ENCODE measurements at regions of chr6 and their contacts with region 1.

Region 1: GRCh38 chr6:154783229-154783628 is 50.0 kb downstream of the SCAF8 start:
- DNase-seq: no peak
- ATAC-seq: no peak
- H3K4me3 ChIP-seq: no peak overlapping the region
- H3K4me3 Mint-ChIP-seq: no peak overlapping the region
- H3K27ac ChIP-seq: no peak overlapping the region
- H3K27ac Mint-ChIP-seq: peak overlapping the region in 6 of 9 donors; percentile 12 to 67 (median 37)
- H3K4me1 ChIP-seq: no peaks in the 10 kb centered on the region
- H3K4me1 Mint-ChIP-seq: peaks cover 16 to 77% (median 49%) of the 10 kb centered on the region in 7 donors
- H3K27me3 ChIP-seq: no peaks in the 10 kb centered on the region
- H3K27me3 Mint-ChIP-seq: no peaks in the 10 kb centered on the region

Region 2: GRCh38 chr6:154738551-154738961 is 44.7 kb before region 1 on chr6:
- CTCF ChIA-PET with region 1: no interaction called
- POLR2A ChIA-PET with region 1: interaction called, 3 read pairs
- intact Hi-C with region 1: loop called in 1 of 2 experiments (anchors 5 kb)
- DNase-seq: no peak
- ATAC-seq: no peak
- H3K4me3 ChIP-seq: no peak overlapping the region
- H3K4me3 Mint-ChIP-seq: peak overlapping the region in 8 of 10 donors; percentile 5 to 92 (median 48)
- H3K27ac ChIP-seq: no peak overlapping the region
- H3K27ac Mint-ChIP-seq: peak overlapping the region in 3 of 9 donors; percentile 19 to 41 (median 22)
- H3K4me1 ChIP-seq: peaks cover 22 to 35% of the 10 kb centered on the region in 2 donors
- H3K4me1 Mint-ChIP-seq: peaks cover 37 to 87% (median 76%) of the 10 kb centered on the region in 7 donors
- H3K27me3 ChIP-seq: no peaks in the 10 kb centered on the region
- H3K27me3 Mint-ChIP-seq: no peaks in the 10 kb centered on the region

Region 3: GRCh38 chr6:154800338-154800737 is 17.1 kb after region 1 on chr6:
- CTCF ChIA-PET with region 1: no interaction called
- POLR2A ChIA-PET with region 1: no interaction called
- intact Hi-C with region 1: loop called in 1 of 2 experiments (anchors 2 kb)
- DNase-seq: no peak
- ATAC-seq: peak; percentile 26
- H3K4me3 ChIP-seq: no peak overlapping the region
- H3K4me3 Mint-ChIP-seq: no peak overlapping the region
- H3K27ac ChIP-seq: peak overlapping the region; percentile 20
- H3K27ac Mint-ChIP-seq: peak overlapping the region; percentile 24 to 89 (median 60)
- H3K4me1 ChIP-seq: no peaks in the 10 kb centered on the region
- H3K4me1 Mint-ChIP-seq: peaks cover 13 to 35% (median 23%) of the 10 kb centered on the region in 7 donors
- H3K27me3 ChIP-seq: no peaks in the 10 kb centered on the region
- H3K27me3 Mint-ChIP-seq: no peaks in the 10 kb centered on the region

Measured in naive thymus-derived CD4-positive, alpha-beta T cell (primary cell).